Activated T-helper 2 cell treated with anti-CD3 and anti-CD28 coated beads, Interferon-gamma antibody, Interleukin-2, Interleukin-4, amounts not matched to agents 10 μg/mL and 5 μg/mL and 100 μg/mL, durations not matched to agents 14 hours and 24 hours and 36 hours (primary cell): ENCODE measurements at regions of chr16 and their contacts with region 1.

Region 1: DNA sequence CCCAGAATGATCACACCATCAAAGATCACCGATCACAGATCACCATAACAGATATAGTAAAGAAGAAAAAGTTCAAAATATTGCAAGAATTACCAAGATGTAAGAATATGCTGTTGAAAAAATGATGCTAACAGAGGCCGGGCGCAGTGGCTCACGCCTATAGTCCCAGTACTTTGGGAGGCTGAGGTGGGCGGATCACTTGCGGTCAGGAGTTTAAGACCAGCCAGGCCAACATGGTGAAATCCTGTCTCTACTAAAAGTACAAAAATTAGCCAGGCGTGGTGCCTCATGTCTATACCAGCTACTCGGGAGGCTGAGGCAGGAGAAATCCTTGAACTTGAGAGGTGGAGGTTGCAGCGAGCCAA is 53.2 kb downstream of the CPPED1 start:
- DNase-seq: no peak
- H3K4me3 Mint-ChIP-seq: peak overlapping the region; percentile 48
- H3K27ac Mint-ChIP-seq: peak overlapping the region; percentile 91
- H3K4me1 Mint-ChIP-seq: peaks cover 39% of the 10 kb centered on the region
- H3K27me3 Mint-ChIP-seq: no peaks in the 10 kb centered on the region

Region 2: GRCh38 chr16:12026741-12027490 is 723.6 kb before region 1 on chr16:
- intact Hi-C with region 1: no loop called
- DNase-seq: no peak
- H3K4me3 Mint-ChIP-seq: no peak overlapping the region
- H3K27ac Mint-ChIP-seq: no peak overlapping the region
- H3K4me1 Mint-ChIP-seq: no peaks in the 10 kb centered on the region
- H3K27me3 Mint-ChIP-seq: no peaks in the 10 kb centered on the region

Region 3: DNA sequence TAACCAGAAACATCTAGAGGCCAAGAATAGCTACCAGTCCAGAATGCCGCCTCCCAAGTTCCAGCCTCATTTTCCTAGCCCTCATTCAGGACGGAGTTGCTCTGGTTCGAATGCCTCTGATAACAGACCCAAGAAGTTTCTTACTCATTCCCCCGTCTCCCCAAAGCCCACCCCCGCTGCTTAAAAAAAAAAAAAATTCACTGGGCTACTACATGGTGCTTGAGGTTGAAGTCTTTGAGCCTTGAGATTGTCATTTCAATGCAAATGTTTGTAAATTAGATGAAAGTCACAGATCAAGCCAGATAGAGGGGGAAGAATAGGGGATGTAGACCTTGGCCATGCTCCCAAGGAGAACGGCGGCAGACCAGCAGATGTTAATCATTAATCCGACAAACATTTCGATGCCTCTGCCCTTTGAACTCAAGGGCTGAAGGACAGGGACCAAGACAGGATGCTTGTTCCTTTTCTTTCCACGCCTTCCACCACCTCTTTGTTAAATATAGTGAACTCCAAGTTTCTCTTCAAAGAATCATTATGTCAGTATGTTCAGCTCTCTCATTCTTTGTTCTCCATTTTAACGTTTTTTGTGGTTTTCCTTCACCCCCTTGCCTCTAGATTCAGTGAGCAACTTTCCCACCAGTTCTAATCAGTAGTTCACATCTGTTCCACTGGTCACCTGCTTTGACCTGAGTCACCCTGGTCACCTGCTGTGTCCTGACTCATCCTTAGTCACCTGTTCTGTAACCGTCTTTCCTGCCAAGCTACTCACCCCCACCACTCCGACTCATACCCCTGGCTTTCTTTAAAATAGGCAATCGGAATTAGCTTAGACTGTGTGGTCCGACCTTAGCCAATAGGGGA is 137.2 kb before region 1 on chr16:
- intact Hi-C with region 1: loop called (anchors 5 kb)
- DNase-seq: no peak
- H3K4me3 Mint-ChIP-seq: no peak overlapping the region
- H3K27ac Mint-ChIP-seq: peak overlapping the region; percentile 59
- H3K4me1 Mint-ChIP-seq: peaks cover 27% of the 10 kb centered on the region
- H3K27me3 Mint-ChIP-seq: no peaks in the 10 kb centered on the region

Region 4: DNA sequence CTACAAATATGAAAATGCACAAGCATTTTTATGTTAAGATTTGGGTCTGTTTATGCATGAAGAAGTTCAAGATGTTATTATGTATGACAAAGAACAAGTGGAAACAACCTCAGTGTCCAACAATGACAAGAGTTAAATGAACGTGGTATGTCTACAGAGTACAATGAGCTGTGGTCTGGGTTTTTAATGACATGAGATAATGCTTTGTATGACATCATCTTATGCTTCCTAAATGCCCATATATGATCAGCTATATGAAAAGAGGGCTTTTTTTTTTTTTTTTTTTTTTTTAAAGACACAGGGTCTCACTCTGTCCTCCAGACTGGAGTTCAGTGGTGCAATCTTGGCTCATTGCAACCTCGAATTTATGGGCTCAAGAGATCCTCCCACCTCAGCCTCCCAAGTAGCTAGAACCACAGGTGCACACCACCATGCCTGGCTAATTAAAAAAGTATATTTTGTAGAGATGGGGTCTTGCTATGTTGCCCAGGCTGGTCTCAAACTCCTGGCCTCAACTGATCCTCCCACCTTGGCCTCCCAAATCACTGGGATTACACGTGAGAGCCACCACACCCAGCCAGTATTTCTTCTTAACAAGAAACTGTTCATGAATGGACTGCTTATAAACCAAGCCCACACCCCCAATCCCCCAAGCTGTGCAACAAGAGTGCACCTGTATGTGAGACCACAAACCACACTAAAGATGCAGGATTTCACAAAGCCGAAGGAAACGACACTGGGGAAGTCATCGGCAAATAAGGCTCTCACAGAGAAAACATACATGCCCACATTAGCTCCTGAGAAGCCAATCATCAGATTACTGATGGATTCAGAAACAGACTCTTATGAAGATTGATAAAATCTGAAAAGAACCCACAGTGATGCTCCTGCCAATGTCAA is 61.3 kb before region 1 on chr16:
- intact Hi-C with region 1: loop called (anchors 2 kb)
- DNase-seq: no peak
- H3K4me3 Mint-ChIP-seq: no peak overlapping the region
- H3K27ac Mint-ChIP-seq: no peak overlapping the region
- H3K4me1 Mint-ChIP-seq: peaks cover 19% of the 10 kb centered on the region
- H3K27me3 Mint-ChIP-seq: no peaks in the 10 kb centered on the region

Region 5: GRCh38 chr16:12803203-12804097 is 52.9 kb after region 1 on chr16 and contains the start of gene CPPED1:
- intact Hi-C with region 1: loop called (anchors 1 kb)
- DNase-seq: peak; percentile 88
- H3K4me3 Mint-ChIP-seq: peak within 1 kb of the TSS; percentile 95
- H3K27ac Mint-ChIP-seq: peak within 1 kb of the TSS; percentile 92
- H3K4me1 Mint-ChIP-seq: peaks cover 34% of the 10 kb centered on the region
- H3K27me3 Mint-ChIP-seq: no peaks in the 10 kb centered on the region
- total RNA-seq, gene CPPED1: 9.0 and 9.5 TPM in 2 replicates

Region 6: DNA sequence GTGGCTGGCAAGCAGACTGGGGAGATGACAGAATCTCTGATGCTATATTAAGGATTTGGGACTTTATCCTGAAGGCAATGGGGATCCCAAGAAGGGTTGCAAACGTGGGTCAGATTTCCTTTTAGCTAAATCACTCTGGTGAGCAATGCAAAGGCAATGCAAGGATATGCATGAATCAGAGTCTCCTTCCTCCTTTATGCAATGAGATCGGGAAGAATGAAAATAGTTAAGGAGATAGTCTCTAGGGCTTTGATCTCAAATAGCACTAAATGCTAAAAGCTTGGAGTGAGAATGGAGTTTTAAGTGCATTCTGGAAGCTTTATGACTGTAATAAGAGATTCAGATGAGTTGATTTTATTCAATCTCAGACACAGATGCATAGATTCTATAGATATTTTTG is 123.7 kb after region 1 on chr16:
- intact Hi-C with region 1: no loop called
- DNase-seq: no peak
- H3K4me3 Mint-ChIP-seq: no peak overlapping the region
- H3K27ac Mint-ChIP-seq: no peak overlapping the region
- H3K4me1 Mint-ChIP-seq: no peaks in the 10 kb centered on the region
- H3K27me3 Mint-ChIP-seq: no peaks in the 10 kb centered on the region